HepG2 (cell line): ENCODE measurements at regions of chr3 and their contacts with region 1.

Region 1: GRCh38 chr3:105505170-105505569 is 138.5 kb downstream of the ALCAM start:
- DNase-seq: no peak
- ATAC-seq: no peak
- H3K4me3 ChIP-seq: peak overlapping the region in 1 of 3 experiments; percentile 77; a peak in 1 of 6 replicates
- H3K27ac ChIP-seq: peak overlapping the region; percentile 81
- H3K4me1 ChIP-seq: peaks cover 43% of the 10 kb centered on the region
- H3K27me3 ChIP-seq: no peaks in the 10 kb centered on the region; a peak in 1 of 5 replicates
- CTCF ChIP-seq: no peak
- EP300 ChIP-seq: no peak
- POLR2A ChIP-seq: no peak
- RAD21 ChIP-seq: no peak

Region 2: GRCh38 chr3:105385819-105386508 is 119.2 kb before region 1 on chr3:
- CTCF ChIA-PET with region 1: interaction called, 4 read pairs
- POLR2A ChIA-PET with region 1: interaction called, 53 read pairs
- in situ Hi-C with region 1: no loop called
- intact Hi-C with region 1: loop called (anchors 1 kb)
- DNase-seq: no peak
- ATAC-seq: no peak
- H3K4me3 ChIP-seq: no peak overlapping the region
- H3K27ac ChIP-seq: peak overlapping the region; percentile 71
- H3K4me1 ChIP-seq: peaks cover 38% of the 10 kb centered on the region
- H3K27me3 ChIP-seq: no peaks in the 10 kb centered on the region
- CTCF ChIP-seq: no peak
- EP300 ChIP-seq: no peak
- POLR2A ChIP-seq: no peak
- RAD21 ChIP-seq: no peak

Region 3: GRCh38 chr3:105429034-105429762 is 76.0 kb before region 1 on chr3:
- CTCF ChIA-PET with region 1: no interaction called
- POLR2A ChIA-PET with region 1: interaction called, 3 read pairs
- in situ Hi-C with region 1: no loop called
- intact Hi-C with region 1: loop called (anchors 5 kb)
- DNase-seq: peak; percentile 5
- ATAC-seq: no peak
- H3K4me3 ChIP-seq: no peak overlapping the region
- H3K27ac ChIP-seq: peak overlapping the region; percentile 24
- H3K4me1 ChIP-seq: peaks cover 28% of the 10 kb centered on the region
- H3K27me3 ChIP-seq: no peaks in the 10 kb centered on the region
- CTCF ChIP-seq: no peak
- EP300 ChIP-seq: no peak
- POLR2A ChIP-seq: no peak
- RAD21 ChIP-seq: no peak

Region 4: DNA sequence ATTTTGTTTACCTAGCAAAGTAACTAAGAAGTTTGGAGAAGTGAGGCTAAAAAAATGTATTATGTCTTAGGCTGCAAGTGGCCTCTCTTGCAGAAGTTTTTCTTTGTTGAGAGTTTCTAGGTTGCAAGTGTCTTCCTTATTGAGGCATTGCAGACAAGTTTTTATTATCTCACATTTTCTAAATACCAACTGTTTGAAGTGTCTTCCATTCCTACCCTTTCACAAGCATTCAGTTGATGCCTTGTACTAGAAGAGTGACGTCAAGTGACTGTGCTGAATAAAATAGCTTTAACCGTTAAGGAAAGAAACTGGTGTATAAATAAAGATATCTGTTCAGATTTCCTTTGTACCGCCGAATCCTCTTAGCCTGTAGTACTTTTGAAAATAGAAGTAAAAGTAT is 15.1 kb before region 1 on chr3:
- CTCF ChIA-PET with region 1: no interaction called
- POLR2A ChIA-PET with region 1: interaction called, 18 read pairs
- in situ Hi-C with region 1: no loop called
- intact Hi-C with region 1: no loop called
- DNase-seq: no peak
- ATAC-seq: no peak
- H3K4me3 ChIP-seq: no peak overlapping the region
- H3K27ac ChIP-seq: no peak overlapping the region
- H3K4me1 ChIP-seq: peaks cover 12% of the 10 kb centered on the region
- H3K27me3 ChIP-seq: no peaks in the 10 kb centered on the region
- CTCF ChIP-seq: no peak
- EP300 ChIP-seq: no peak
- POLR2A ChIP-seq: no peak
- RAD21 ChIP-seq: no peak

Region 5: GRCh38 chr3:105553851-105554250 is 48.7 kb after region 1 on chr3:
- CTCF ChIA-PET with region 1: no interaction called
- POLR2A ChIA-PET with region 1: no interaction called
- in situ Hi-C with region 1: no loop called
- intact Hi-C with region 1: no loop called
- DNase-seq: no peak
- ATAC-seq: no peak
- H3K4me3 ChIP-seq: no peak overlapping the region
- H3K27ac ChIP-seq: no peak overlapping the region
- H3K4me1 ChIP-seq: no peaks in the 10 kb centered on the region
- H3K27me3 ChIP-seq: no peaks in the 10 kb centered on the region
- CTCF ChIP-seq: no peak
- EP300 ChIP-seq: no peak
- POLR2A ChIP-seq: no peak
- RAD21 ChIP-seq: no peak